Motor neuron (in vitro differentiated cells): ENCODE measurements at regions of chr12 and their contacts with region 1.

Region 1: DNA sequence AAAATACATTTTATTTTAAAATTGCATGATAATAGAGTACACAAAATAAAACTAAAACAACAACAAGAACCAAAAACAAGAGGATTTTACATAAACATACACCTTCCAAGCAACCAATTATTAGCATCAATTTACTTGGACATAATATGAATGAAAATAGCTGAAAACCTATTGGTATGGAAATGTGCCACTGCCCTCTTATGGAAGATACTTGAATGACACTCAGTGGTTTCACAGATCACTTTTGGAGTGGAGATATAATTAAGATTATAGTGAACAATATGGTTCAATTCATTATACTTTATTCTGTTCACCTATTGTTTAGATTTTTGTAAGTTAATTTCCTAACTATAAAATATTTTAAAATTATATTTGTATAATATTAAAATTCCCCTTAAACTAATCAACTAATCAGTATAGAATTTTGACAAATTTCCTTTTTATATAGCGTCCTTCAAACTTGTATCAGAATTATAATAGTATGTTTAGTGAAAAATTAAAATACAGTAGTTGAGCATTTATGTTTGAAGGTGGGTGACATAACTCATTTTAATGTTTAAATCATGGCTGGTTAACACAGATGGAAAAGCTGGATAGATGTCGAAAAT is 70.1 kb downstream of the SLC6A15 start:
- ATAC-seq: peak in 1 of 8 experiments; percentile 21
- H3K4me3 ChIP-seq: no peak overlapping the region
- H3K27ac ChIP-seq: no peak overlapping the region
- H3K4me1 ChIP-seq: no peaks in the 10 kb centered on the region

Region 2: GRCh38 chr12:84315926-84316325 is 526.6 kb before region 1 on chr12:
- in situ Hi-C with region 1: no loop called
- ATAC-seq: no peak
- H3K4me3 ChIP-seq: no peak overlapping the region
- H3K27ac ChIP-seq: no peak overlapping the region
- H3K4me1 ChIP-seq: no peaks in the 10 kb centered on the region

Region 3: DNA sequence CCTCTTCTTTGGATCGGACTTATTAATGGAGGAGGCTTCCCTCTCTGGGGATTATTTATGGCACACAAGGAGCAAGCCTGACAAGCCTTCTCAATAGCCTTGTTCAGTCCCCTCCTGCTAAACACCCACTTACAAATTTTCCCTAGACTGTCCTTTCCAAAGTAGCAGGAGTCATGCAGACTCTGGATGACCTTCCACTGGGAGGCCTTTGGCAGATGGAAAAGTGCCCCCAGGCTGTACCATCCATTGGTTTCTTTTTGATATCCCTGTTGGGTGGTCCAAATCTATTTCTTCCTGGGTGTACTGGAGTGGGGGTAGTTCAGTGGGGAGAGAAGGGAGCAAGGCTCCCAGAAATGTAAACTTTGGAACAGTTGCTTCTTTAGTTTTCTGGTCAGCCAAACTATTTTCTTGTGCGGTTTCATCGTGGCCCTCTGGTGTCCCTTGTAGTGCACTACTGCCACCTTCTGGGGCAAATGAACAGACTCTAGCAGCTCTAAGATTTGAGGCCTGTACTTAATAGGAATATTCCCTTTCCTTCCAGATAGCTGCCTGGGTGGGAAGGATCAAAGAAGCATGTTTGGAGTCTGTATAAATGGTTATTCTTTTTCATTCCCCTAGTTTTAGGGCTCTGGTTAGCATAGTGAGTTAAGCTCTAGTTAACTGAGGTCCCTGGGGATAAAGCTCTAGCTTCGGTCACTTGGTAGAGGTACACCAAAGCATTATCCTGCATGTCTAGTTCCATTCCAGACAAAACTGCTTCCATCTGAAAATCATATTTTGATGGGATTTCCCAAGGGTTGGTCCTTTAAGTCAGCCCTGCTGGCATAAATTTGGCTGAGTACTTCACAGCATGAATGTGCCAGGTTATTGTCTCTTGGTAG is 339.4 kb before region 1 on chr12:
- in situ Hi-C with region 1: loop called in 1 of 9 experiments (anchors 25 kb)
- ATAC-seq: peak in 4 of 8 experiments; percentile 13 to 98 (median 90)
- H3K4me3 ChIP-seq: no peak overlapping the region
- H3K27ac ChIP-seq: no peak overlapping the region
- H3K4me1 ChIP-seq: peaks cover 0 to 6% of the 10 kb centered on the region in 2 donors

Region 4: DNA sequence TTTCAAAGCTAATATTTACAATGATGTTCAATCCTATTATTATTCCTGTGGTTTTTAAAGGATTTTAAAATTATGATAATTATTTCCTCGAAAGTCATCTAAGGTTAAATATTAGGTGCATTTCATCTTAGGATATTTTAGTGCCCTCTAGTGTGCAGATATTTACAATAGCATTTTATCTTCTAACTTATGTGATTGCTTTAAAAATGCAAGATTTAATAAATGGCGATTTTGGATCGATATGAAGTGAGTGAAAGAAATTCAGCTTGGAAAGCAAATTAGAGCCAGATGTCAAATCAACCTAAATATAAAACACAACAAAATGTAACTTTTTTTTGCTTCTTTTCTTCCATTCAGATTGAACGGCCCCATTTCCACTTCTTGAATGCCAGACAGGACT is 223.4 kb before region 1 on chr12:
- in situ Hi-C with region 1: loop called in 1 of 9 experiments (anchors 25 kb)
- ATAC-seq: no peak
- H3K4me3 ChIP-seq: no peak overlapping the region
- H3K27ac ChIP-seq: no peak overlapping the region
- H3K4me1 ChIP-seq: no peaks in the 10 kb centered on the region

Region 5: GRCh38 chr12:84937415-84937814 is 94.9 kb after region 1 on chr12:
- in situ Hi-C with region 1: no loop called
- ATAC-seq: peak in 1 of 8 experiments; percentile 67
- H3K4me3 ChIP-seq: no peak overlapping the region
- H3K27ac ChIP-seq: no peak overlapping the region
- H3K4me1 ChIP-seq: no peaks in the 10 kb centered on the region